ENCODE measurements at regions of chr3 and their contacts with region 1.

Region 1: DNA sequence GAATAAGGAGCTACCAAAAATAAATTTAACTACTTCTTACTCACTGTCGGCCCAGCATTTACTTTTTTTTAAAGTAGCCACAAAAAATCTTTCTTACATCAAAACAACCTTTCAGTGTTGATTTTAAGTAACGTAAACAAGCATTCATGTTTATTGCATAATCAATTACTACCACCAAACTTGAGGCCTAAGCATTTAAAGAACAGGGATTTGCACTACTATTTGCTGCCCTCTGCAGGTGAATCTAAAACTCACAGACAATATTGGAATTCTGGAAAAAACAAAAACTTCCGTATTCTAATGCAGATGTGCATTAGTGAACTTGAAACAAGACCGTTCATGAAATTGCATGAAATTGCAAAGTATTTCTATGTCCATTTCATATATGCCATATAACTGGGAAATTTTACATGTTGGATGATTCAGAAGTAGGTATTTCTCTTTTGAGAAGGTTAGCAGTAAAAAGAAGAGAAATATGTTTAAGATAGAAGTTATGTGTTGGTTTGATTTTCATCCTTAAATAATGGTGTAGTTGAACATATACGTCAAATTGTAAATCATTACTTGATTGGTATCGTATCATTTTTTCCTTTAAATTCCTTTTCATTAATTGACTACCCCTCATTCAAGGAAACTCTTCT is 55.6 kb downstream of the CGGBP1 start:
- DNase-seq: peak; percentile 74
- H3K4me3 Mint-ChIP-seq: no peak overlapping the region
- H3K27ac Mint-ChIP-seq: no peak overlapping the region
- H3K4me1 Mint-ChIP-seq: peaks cover 5% of the 10 kb centered on the region
- H3K27me3 Mint-ChIP-seq: peaks cover 11% of the 10 kb centered on the region

Region 2: GRCh38 chr3:87298111-87298718 is 705.0 kb before region 1 on chr3:
- intact Hi-C with region 1: loop called (anchors 10 kb)
- DNase-seq: no peak
- H3K4me3 Mint-ChIP-seq: no peak overlapping the region
- H3K27ac Mint-ChIP-seq: no peak overlapping the region
- H3K4me1 Mint-ChIP-seq: no peaks in the 10 kb centered on the region
- H3K27me3 Mint-ChIP-seq: peaks cover 2% of the 10 kb centered on the region

Region 3: GRCh38 chr3:87503900-87504508 is 499.2 kb before region 1 on chr3:
- intact Hi-C with region 1: loop called (anchors 10 kb)
- DNase-seq: peak; percentile 67
- H3K4me3 Mint-ChIP-seq: no peak overlapping the region
- H3K27ac Mint-ChIP-seq: no peak overlapping the region
- H3K4me1 Mint-ChIP-seq: no peaks in the 10 kb centered on the region
- H3K27me3 Mint-ChIP-seq: no peaks in the 10 kb centered on the region

Region 4: GRCh38 chr3:87598661-87599318 is 404.4 kb before region 1 on chr3:
- intact Hi-C with region 1: no loop called
- DNase-seq: no peak
- H3K4me3 Mint-ChIP-seq: no peak overlapping the region
- H3K27ac Mint-ChIP-seq: no peak overlapping the region
- H3K4me1 Mint-ChIP-seq: no peaks in the 10 kb centered on the region
- H3K27me3 Mint-ChIP-seq: no peaks in the 10 kb centered on the region

Region 5: DNA sequence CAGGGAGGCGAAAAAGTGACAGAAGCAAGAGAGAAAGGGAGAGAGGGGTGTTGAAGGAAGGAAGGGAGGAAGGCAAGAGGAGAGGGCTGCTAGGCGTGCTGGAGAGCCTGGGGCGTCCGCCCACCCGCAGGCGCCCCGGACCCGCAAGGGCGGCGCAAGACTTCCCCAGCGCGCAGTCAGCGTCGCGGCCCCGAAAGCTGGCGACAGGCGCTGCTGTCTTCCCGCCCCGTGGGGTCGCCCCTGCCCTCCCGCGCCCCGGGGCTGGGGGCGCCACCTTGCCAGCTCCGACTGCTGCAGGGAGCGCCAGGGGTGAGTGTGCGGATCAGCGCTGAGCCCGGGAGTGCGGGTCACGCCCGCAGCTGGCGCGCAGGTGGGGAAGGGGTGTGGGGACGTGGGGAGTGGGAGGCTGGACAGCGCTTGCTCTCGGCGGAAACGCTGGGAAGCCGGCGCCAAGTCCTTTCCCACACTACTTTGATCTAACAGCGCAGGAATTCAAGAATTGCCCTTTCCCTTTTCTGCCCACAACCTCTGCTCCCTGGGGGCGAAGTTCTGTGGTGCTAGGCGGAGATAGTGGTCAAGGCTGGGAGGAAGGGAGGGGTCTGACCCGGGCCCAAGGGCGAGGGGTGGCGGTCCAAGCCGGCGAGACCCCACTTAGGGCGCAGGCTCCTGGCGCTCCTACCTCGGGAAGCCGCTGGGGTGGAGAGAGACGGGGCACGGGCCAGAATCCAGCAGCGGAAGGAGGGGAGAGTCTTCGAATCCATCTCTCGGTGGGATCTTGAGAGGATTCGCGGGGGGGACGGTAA is 210.5 kb before region 1 on chr3:
- intact Hi-C with region 1: loop called (anchors 5 kb)
- DNase-seq: peak; percentile 59
- H3K4me3 Mint-ChIP-seq: peak within 1 kb of the TSS; percentile 76
- H3K27ac Mint-ChIP-seq: no peak within 1 kb of the TSS
- H3K4me1 Mint-ChIP-seq: peaks cover 20% of the 10 kb centered on the region
- H3K27me3 Mint-ChIP-seq: peaks cover 69% of the 10 kb centered on the region

Region 6: GRCh38 chr3:88113311-88114162 is 110.3 kb after region 1 on chr3:
- intact Hi-C with region 1: loop called (anchors 2 kb)
- DNase-seq: peak; percentile 88
- H3K4me3 Mint-ChIP-seq: no peak overlapping the region
- H3K27ac Mint-ChIP-seq: no peak overlapping the region
- H3K4me1 Mint-ChIP-seq: peaks cover 19% of the 10 kb centered on the region
- H3K27me3 Mint-ChIP-seq: no peaks in the 10 kb centered on the region

Measured in activated CD4-positive, alpha-beta T cell treated with anti-CD3 and anti-CD28 coated beads, Interleukin-2, amount 10 ng/mL, durations not matched to agents 24 days and 14 days (primary cell).